ENCODE measurements at regions of chr19 and their contacts with region 1.

Region 1: GRCh38 chr19:11125994-11126685 is 29.4 kb downstream of the SPC24 start:
- DNase-seq: peak; percentile 83
- ATAC-seq: peak; percentile 62
- H3K4me3 ChIP-seq: no peak overlapping the region
- H3K4me3 Mint-ChIP-seq: no peak overlapping the region
- H3K27ac ChIP-seq: no peak overlapping the region
- H3K27ac Mint-ChIP-seq: no peak overlapping the region
- H3K4me1 ChIP-seq: peaks cover 0 to 5% of the 10 kb centered on the region in 2 donors
- H3K4me1 Mint-ChIP-seq: peaks cover 7% of the 10 kb centered on the region
- H3K27me3 ChIP-seq: no peaks in the 10 kb centered on the region
- H3K27me3 Mint-ChIP-seq: no peaks in the 10 kb centered on the region
- CTCF ChIP-seq: peak; percentile 90

Region 2: GRCh38 chr19:10936661-10937084 is 189.5 kb before region 1 on chr19:
- CTCF ChIA-PET with region 1: interaction called, 10 read pairs
- POLR2A ChIA-PET with region 1: no interaction called
- intact Hi-C with region 1: no loop called
- DNase-seq: peak; percentile 73
- ATAC-seq: peak; percentile 60
- H3K4me3 ChIP-seq: no peak overlapping the region
- H3K4me3 Mint-ChIP-seq: peak overlapping the region; percentile 34
- H3K27ac ChIP-seq: no peak overlapping the region
- H3K27ac Mint-ChIP-seq: no peak overlapping the region
- H3K4me1 ChIP-seq: peaks cover 0 to 4% of the 10 kb centered on the region in 2 donors
- H3K4me1 Mint-ChIP-seq: peaks cover 2% of the 10 kb centered on the region
- H3K27me3 ChIP-seq: no peaks in the 10 kb centered on the region
- H3K27me3 Mint-ChIP-seq: no peaks in the 10 kb centered on the region
- CTCF ChIP-seq: peak; percentile 73

Region 3: DNA sequence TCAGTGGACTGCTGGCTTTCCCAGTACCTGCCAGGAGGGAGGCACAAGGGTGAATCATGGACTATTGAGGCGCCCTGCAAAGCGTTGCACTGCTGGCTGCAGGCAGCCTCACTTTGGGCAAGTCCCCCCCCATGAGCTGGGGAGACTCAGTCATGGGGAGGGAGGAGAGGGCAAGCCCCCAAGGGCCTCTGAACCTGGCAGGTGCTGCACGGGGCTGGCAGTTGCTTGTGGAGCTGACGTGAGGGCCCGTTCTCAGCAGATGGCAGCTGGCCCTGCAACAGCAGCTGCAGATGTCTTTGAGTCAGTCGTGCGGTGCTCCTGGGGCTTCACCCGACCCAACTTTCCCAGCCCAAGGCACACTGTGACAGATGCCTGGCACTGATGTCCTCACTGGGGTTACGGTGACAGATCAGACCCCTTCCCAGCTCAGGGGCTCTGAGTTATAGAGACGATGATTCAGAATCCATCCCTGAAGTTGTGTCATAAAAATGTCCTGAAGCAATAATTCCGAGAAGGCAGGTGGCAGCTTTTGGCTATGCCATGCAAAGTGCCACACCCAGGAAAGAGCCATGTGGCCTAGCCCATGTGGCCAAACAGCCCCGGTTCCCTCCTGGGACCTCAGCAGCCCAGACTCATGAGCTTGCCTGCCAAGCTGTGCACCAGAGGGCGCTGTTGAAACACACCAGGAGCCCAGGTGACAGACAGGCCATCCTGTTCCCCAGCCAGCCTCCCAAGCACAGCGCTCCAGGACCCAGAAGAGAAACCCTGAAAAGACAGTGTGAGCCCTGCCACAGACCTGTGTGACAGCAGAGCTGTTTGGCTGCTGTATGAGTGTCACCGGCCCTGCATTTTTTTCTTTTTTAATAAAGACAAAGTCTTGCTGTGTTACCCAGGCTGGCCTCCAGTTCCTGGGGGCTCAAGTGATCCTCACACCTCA is 90.4 kb before region 1 on chr19:
- CTCF ChIA-PET with region 1: interaction called, 179 read pairs
- POLR2A ChIA-PET with region 1: interaction called, 4 read pairs
- intact Hi-C with region 1: loop called (anchors 1 kb)
- DNase-seq: peak; percentile 94
- ATAC-seq: peak; percentile 87
- H3K4me3 ChIP-seq: no peak overlapping the region
- H3K4me3 Mint-ChIP-seq: peak overlapping the region; percentile 44
- H3K27ac ChIP-seq: no peak overlapping the region
- H3K27ac Mint-ChIP-seq: peak overlapping the region; percentile 88
- H3K4me1 ChIP-seq: peaks cover 11 to 26% of the 10 kb centered on the region in 2 donors
- H3K4me1 Mint-ChIP-seq: peaks cover 18% of the 10 kb centered on the region
- H3K27me3 ChIP-seq: peaks cover 0 to 14% (median 1%) of the 10 kb centered on the region in 4 experiments
- H3K27me3 Mint-ChIP-seq: peaks cover 6% of the 10 kb centered on the region
- CTCF ChIP-seq: peak; percentile 93

Region 4: DNA sequence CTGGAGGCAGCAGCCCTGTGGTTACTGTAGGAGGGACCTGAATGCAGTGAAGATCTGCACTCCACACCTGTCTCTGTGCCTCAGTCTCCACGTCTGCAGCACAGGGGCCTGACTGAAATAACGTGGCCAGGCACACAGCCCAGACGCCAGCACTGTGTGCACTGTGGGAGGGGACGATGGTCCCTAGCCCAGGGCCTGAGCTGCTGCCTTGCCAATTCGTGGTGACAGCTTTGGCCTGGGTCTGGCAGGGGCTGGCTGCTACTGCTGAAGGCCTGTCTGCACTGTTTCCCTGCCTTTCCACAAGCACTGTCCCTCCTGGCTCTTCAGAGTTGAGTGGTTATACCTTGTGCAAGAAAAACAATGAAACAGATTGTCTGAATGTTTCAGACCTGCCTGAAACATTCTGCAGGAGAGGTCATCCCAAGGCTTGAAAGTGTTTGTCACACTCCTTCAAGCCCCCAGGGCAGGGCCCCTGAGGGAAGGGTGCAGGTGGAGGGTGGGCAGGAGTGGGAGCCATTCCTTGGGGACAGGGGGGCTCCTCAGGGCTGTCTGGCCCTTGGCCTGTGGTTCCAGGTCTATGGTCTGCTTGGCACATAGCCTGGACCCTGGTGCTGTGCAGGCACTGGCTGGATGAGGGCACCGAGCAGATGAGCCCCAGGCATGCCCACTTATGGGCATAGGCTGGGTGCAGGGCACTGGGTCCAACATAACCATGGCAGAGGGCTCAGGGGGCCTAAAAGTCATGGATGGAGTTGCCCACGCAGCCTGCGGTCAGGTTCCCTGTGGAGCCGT is 75.6 kb before region 1 on chr19:
- CTCF ChIA-PET with region 1: interaction called, 11 read pairs
- POLR2A ChIA-PET with region 1: no interaction called
- intact Hi-C with region 1: no loop called
- DNase-seq: no peak
- ATAC-seq: no peak
- H3K4me3 ChIP-seq: no peak overlapping the region
- H3K4me3 Mint-ChIP-seq: peak overlapping the region; percentile 69
- H3K27ac ChIP-seq: no peak overlapping the region
- H3K27ac Mint-ChIP-seq: no peak overlapping the region
- H3K4me1 ChIP-seq: peaks cover 78 to 92% of the 10 kb centered on the region in 2 donors
- H3K4me1 Mint-ChIP-seq: peaks cover 72% of the 10 kb centered on the region
- H3K27me3 ChIP-seq: peaks cover 0 to 29% (median 4%) of the 10 kb centered on the region in 4 experiments
- H3K27me3 Mint-ChIP-seq: peaks cover 17% of the 10 kb centered on the region
- CTCF ChIP-seq: no peak

Region 5: GRCh38 chr19:11078893-11079292 is 47.2 kb before region 1 on chr19:
- CTCF ChIA-PET with region 1: no interaction called
- POLR2A ChIA-PET with region 1: no interaction called
- intact Hi-C with region 1: no loop called
- DNase-seq: no peak
- ATAC-seq: no peak
- H3K4me3 ChIP-seq: no peak overlapping the region
- H3K4me3 Mint-ChIP-seq: no peak overlapping the region
- H3K27ac ChIP-seq: no peak overlapping the region
- H3K27ac Mint-ChIP-seq: no peak overlapping the region
- H3K4me1 ChIP-seq: peaks cover 7 to 8% of the 10 kb centered on the region in 2 donors
- H3K4me1 Mint-ChIP-seq: peaks cover 10% of the 10 kb centered on the region
- H3K27me3 ChIP-seq: peaks cover 0 to 11% (median 5%) of the 10 kb centered on the region in 4 experiments
- H3K27me3 Mint-ChIP-seq: peaks cover 36% of the 10 kb centered on the region
- CTCF ChIP-seq: no peak

Region 6: GRCh38 chr19:11203194-11204075 is 77.3 kb after region 1 on chr19:
- CTCF ChIA-PET with region 1: interaction called, 15 read pairs
- POLR2A ChIA-PET with region 1: no interaction called
- intact Hi-C with region 1: loop called (anchors 2 kb)
- DNase-seq: no peak
- ATAC-seq: peak; percentile 50
- H3K4me3 ChIP-seq: no peak overlapping the region
- H3K4me3 Mint-ChIP-seq: no peak overlapping the region
- H3K27ac ChIP-seq: no peak overlapping the region
- H3K27ac Mint-ChIP-seq: no peak overlapping the region
- H3K4me1 ChIP-seq: peaks cover 0 to 8% of the 10 kb centered on the region in 2 donors
- H3K4me1 Mint-ChIP-seq: peaks cover 11% of the 10 kb centered on the region
- H3K27me3 ChIP-seq: peaks cover 0 to 3% (median 0%) of the 10 kb centered on the region in 4 experiments
- H3K27me3 Mint-ChIP-seq: peaks cover 3% of the 10 kb centered on the region
- CTCF ChIP-seq: peak; percentile 68

Measured in B cell (primary cell).